CD8-positive, alpha-beta T cell (primary cell): ENCODE measurements at regions of chr3 and their contacts with region 1.

Region 1: DNA sequence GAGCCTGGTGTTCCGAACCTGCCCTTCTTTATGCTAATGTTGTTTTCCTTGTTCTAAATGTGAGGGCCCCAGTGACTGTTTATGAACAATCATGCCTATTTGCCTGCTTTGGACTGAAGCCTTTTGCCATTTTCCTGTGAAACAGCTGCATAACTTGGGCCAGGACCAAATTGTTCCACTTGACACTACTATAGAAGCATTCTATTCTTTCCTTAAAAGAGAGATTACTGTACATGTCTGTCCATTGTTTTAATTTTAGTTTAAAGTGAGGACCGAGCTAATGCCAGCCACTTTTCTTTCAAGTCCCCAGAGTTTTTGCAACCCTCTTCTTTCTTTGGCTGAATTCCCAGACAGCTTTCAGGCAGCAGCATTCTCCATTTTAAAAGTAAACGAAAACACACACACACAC is 980.3 kb downstream of the CADM2 start:
- DNase-seq: no peak
- ATAC-seq: no peak
- H3K4me3 ChIP-seq: no peak overlapping the region
- H3K4me3 Mint-ChIP-seq: no peak overlapping the region
- H3K27ac ChIP-seq: no peak overlapping the region
- H3K27ac Mint-ChIP-seq: no peak overlapping the region
- H3K4me1 ChIP-seq: no peaks in the 10 kb centered on the region
- H3K4me1 Mint-ChIP-seq: no peaks in the 10 kb centered on the region
- H3K27me3 ChIP-seq: no peaks in the 10 kb centered on the region
- H3K27me3 Mint-ChIP-seq: no peaks in the 10 kb centered on the region
- CTCF ChIP-seq: no peak

Region 2: DNA sequence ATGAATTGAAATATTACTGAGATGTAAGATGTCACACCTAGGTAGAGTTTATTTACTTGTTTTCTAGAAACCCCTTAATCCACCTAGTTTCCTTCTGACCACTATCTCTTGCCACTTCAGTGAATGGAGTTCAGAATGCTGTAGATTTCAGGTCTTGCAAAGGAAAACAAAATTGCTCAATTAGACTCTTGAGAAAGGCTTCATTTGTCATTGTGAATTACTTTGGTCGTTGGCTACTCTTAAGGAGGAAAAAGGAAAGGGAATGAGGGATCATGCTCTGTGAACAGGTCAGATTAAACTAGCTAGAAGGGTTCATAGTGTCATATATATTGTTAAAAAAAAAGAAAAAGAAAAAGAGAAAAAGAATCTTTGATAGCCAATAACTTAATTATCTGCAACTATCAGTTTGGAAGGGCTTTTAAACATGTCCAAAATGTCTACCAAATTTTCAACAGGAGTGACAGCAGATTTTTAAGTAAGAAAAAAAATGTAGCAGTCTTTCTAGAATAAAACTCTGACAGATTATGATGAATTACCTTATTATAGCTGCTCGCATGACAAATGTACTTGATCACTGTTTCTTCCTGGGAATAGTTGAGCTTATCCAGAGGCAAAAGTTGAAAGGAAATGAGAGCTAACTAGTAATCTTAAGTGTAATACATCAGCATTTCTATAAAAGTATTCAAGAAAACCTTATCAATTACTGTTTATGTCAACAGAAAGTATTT is 436.8 kb before region 1 on chr3:
- CTCF ChIA-PET with region 1: no interaction called
- POLR2A ChIA-PET with region 1: no interaction called
- intact Hi-C with region 1: no loop called
- DNase-seq: no peak
- ATAC-seq: no peak
- H3K4me3 ChIP-seq: no peak overlapping the region
- H3K4me3 Mint-ChIP-seq: no peak overlapping the region
- H3K27ac ChIP-seq: no peak overlapping the region
- H3K27ac Mint-ChIP-seq: no peak overlapping the region
- H3K4me1 ChIP-seq: no peaks in the 10 kb centered on the region
- H3K4me1 Mint-ChIP-seq: no peaks in the 10 kb centered on the region
- H3K27me3 ChIP-seq: no peaks in the 10 kb centered on the region
- H3K27me3 Mint-ChIP-seq: no peaks in the 10 kb centered on the region
- CTCF ChIP-seq: no peak

Region 3: DNA sequence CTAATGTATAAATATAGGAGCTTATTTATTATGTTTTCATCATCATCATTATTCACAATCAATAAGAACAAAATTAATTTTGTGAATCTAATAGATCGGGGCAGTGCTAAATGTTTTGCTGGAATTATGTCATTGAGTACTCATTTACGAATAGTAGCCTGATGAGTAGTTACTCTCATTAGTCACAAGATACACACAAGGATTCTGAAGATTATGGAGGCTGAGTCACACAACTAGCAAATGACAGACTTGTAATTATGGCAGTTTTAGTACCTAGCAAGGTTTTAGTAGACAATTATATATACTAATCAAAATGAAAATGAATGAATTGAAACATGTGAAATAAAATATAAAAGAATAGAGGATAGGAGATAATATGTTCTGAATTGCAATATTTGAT is 26.1 kb before region 1 on chr3:
- CTCF ChIA-PET with region 1: no interaction called
- POLR2A ChIA-PET with region 1: no interaction called
- intact Hi-C with region 1: loop called in 1 of 2 experiments (anchors 1 kb)
- DNase-seq: no peak
- ATAC-seq: no peak
- H3K4me3 ChIP-seq: no peak overlapping the region
- H3K4me3 Mint-ChIP-seq: no peak overlapping the region
- H3K27ac ChIP-seq: no peak overlapping the region
- H3K27ac Mint-ChIP-seq: no peak overlapping the region
- H3K4me1 ChIP-seq: no peaks in the 10 kb centered on the region
- H3K4me1 Mint-ChIP-seq: no peaks in the 10 kb centered on the region
- H3K27me3 ChIP-seq: no peaks in the 10 kb centered on the region
- H3K27me3 Mint-ChIP-seq: no peaks in the 10 kb centered on the region
- CTCF ChIP-seq: no peak